B cell (primary cell): ENCODE measurements at regions of chr2 and their contacts with region 1.

Region 1: DNA sequence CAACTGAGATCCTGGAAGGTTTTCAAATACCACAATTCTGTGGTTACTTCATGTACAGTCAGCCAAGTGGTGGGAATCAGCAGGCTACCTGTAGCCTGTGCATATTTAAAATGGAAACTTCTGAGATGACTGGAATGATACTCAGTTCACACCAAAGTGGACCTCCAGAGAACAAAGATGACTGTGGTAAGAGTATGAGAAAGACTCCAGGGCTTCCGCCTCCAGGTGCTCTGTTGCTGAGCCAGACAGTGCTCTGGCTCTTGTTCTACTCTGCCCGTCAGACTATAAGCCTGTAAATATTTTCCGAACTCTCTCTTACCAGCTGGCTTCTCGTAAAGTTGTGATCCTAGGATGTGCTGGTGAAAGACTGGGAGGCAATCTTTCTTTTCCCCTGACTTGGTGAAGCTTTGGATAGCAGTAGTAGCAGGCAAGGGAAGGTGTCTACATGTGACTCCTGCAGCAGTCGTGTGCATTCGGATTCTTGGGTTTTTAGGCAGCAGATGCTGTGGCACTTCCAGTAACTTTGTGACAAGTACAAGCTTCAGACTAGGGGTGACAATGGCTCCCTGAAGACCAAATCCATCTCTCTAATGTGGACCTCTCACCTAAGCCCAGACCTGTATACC is 23.1 kb downstream of the ST3GAL5 start:
- DNase-seq: no peak
- ATAC-seq: no peak
- H3K4me3 ChIP-seq: no peak overlapping the region
- H3K4me3 Mint-ChIP-seq: peak overlapping the region; percentile 12
- H3K27ac ChIP-seq: peak overlapping the region in 1 of 2 donors; percentile 68
- H3K27ac Mint-ChIP-seq: peak overlapping the region; percentile 62
- H3K4me1 ChIP-seq: peaks cover 31 to 34% of the 10 kb centered on the region in 2 donors
- H3K4me1 Mint-ChIP-seq: peaks cover 73% of the 10 kb centered on the region
- H3K27me3 ChIP-seq: no peaks in the 10 kb centered on the region
- H3K27me3 Mint-ChIP-seq: no peaks in the 10 kb centered on the region
- CTCF ChIP-seq: no peak

Region 2: DNA sequence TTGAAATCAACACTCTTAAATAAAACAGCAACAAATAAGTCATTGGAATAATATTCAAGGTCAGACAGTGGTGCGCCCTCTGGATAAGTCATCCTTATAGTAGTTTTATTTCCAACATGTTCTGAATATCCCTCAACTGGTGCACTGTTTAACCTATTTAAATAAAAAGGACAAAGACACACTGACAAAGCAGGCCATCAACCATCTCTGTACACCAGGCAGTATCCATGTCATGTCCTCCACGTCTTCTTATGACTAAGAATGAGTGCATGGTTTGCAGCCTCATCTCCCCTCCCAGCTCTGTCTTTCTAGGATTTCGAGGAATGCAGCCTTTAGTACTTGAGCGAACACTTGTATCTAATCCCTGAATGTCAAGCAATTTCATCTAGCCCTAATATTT is 19.2 kb before region 1 on chr2:
- CTCF ChIA-PET with region 1: interaction called, 3 read pairs
- POLR2A ChIA-PET with region 1: interaction called, 3 read pairs
- intact Hi-C with region 1: loop called (anchors 2 kb)
- DNase-seq: no peak
- ATAC-seq: no peak
- H3K4me3 ChIP-seq: no peak overlapping the region
- H3K4me3 Mint-ChIP-seq: no peak overlapping the region
- H3K27ac ChIP-seq: no peak overlapping the region
- H3K27ac Mint-ChIP-seq: peak overlapping the region; percentile 32
- H3K4me1 ChIP-seq: peaks cover 10 to 22% of the 10 kb centered on the region in 2 donors
- H3K4me1 Mint-ChIP-seq: peaks cover 30% of the 10 kb centered on the region
- H3K27me3 ChIP-seq: no peaks in the 10 kb centered on the region
- H3K27me3 Mint-ChIP-seq: no peaks in the 10 kb centered on the region
- CTCF ChIP-seq: no peak